ENCODE measurements at regions of chr2 and their contacts with region 1.

Region 1: GRCh38 chr2:201363857-201364560 is 6.9 kb upstream of the FLACC1 start:
- DNase-seq: no peak

Region 2: GRCh38 chr2:201135411-201135810 is 228.6 kb before region 1 on chr2:
- intact Hi-C with region 1: no loop called
- DNase-seq: no peak

Region 3: DNA sequence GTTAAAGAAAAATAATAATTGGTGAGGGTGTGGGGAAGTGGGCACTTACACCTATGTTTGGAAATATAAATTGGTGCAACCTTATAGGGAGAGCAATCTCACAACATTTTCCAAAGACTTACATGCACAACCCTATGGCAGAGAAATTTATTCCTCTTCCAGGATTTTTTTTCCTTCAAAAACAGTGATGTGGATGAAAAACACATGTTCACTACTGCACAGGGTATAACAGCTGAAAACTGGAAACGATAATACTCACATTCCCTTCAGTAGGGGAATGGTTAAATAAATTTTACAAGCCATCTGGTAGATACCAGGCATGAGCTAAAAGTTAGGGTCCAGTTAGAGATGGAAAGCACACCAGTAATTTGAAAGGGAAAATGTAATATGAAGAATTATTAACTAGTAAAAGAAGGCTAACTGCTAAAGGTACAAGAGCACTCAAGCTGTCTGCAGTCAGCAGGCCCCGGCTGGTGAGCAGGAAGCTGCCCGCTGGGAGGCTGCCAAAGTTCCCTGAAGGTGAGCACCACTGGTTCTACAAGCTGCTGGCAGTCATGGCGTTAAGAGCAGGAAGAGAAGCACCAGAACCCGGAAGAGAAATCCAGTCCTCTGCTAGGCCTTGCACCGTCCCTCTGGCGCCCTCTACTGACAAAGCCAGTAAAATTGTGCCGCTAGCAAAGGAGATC is 132.1 kb before region 1 on chr2:
- intact Hi-C with region 1: loop called (anchors 2 kb)
- DNase-seq: peak; percentile 93

Region 4: DNA sequence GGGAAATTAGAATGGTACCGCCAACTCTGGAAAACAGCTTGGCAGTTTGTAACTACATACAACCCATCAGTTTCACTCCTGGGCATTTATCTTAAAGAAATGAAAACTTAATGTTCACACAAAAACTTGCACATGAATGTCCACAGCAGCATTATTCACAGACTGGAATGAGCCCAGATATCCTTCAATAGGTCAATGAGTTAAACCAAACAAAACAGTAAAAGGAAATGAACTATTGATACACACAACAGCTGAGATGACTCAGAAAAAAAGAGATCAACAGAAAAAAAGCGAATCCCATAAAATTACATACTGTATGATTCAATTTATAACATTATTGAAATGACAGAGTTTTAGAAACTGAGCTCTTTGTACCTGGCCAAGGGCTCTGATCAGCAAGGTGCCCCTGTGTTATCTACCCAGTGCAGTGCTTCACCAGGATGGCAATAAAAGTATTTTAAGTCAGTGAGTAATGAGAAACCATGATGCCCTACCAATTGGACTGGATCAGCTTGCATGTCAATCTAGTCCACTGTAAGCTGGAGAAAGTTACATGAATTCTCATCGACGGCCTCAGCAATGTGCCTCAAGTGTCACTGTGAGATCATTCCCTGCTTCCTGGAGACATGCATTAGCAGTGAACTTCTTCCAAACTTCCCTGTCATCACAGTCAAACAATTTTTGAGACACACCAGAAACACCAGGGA is 257.4 kb after region 1 on chr2:
- intact Hi-C with region 1: loop called (anchors 10 kb)
- DNase-seq: no peak